Activated CD4-positive, alpha-beta T cell treated with anti-CD3 and anti-CD28 coated beads, Interleukin-2, amount 10 ng/mL, durations not matched to agents 7 days and 5 days (primary cell): ENCODE measurements at regions of chr9 and their contacts with region 1.

Region 1: DNA sequence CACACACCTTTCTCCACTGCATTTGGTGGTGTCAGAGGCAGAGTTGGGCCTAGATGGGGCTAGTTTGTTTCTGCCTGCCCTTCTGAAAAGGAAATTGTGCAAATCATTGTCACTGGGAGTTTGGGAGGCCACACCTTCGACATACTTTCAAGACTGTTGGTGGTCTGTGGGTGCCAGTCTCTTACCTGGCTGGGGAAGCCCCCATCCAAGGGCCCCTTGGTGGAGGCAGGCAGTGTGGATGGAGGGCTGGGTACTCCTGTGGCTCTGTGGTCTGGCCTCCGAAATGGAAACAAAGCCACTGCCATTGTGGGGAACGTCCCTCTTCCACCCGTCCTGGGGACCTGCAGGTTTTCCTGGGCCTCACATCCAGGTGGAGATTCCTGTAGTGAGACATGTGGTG is 10.9 kb upstream of the PHYHD1 start:
- DNase-seq: no peak
- H3K4me3 Mint-ChIP-seq: no peak overlapping the region
- H3K27ac Mint-ChIP-seq: no peak overlapping the region
- H3K4me1 Mint-ChIP-seq: peaks cover 58% of the 10 kb centered on the region
- H3K27me3 Mint-ChIP-seq: no peaks in the 10 kb centered on the region

Region 2: DNA sequence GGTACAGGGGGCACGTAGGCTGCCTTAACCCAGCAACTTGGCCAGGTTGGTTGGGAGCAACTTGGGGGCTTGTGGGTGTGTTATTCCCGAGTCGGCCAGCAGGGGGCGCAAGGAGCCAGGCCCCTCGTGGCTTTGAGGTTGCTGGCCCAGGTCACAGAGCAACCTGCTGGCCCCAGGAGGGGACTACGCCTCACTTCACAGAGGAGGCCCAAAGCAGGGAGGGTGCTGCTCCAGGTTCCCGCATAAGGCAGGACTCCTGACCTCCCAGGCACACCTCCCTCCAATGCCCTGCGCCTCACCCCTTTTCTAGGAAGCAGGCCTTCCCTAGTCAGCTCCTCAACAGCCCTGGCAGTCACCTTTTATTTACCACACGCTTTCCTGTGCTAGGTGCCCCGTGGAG is 46.2 kb before region 1 on chr9:
- CTCF ChIA-PET with region 1: no interaction called
- POLR2A ChIA-PET with region 1: interaction called, 10 read pairs
- DNase-seq: peak; percentile 87
- H3K4me3 Mint-ChIP-seq: no peak overlapping the region
- H3K27ac Mint-ChIP-seq: peak overlapping the region; percentile 76
- H3K4me1 Mint-ChIP-seq: peaks cover 11% of the 10 kb centered on the region
- H3K27me3 Mint-ChIP-seq: no peaks in the 10 kb centered on the region

Region 3: DNA sequence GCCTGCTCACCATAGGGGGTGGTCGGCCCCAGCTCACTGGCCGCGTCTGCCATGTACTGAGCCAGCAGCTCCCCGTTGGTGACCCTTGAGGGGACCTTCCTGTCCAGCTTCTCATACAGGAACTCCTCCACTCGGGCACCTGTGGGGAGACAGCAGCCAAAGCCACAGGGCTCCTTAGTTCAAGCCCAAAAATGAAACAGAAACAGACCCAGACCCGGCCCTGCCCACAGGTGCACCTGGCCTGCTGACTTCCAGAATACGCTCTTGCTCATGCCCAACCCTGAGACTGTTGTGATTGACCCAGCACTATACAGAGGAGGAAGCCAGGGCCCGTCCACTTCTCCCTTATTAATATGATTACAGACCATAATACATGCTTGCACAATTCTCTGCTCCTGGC is 111.2 kb after region 1 on chr9:
- CTCF ChIA-PET with region 1: no interaction called
- POLR2A ChIA-PET with region 1: no interaction called
- DNase-seq: peak; percentile 27
- H3K4me3 Mint-ChIP-seq: no peak overlapping the region
- H3K27ac Mint-ChIP-seq: peak overlapping the region; percentile 60
- H3K4me1 Mint-ChIP-seq: peaks cover 29% of the 10 kb centered on the region
- H3K27me3 Mint-ChIP-seq: no peaks in the 10 kb centered on the region